ENCODE measurements at regions of chr3 and their contacts with region 1.

Region 1: GRCh38 chr3:27681245-27681748 is 40.8 kb downstream of the EOMES start:
- DNase-seq: no peak
- H3K4me3 ChIP-seq: no peak overlapping the region
- H3K27ac ChIP-seq: peak overlapping the region; percentile 33 to 64
- H3K4me1 ChIP-seq: peaks cover 3 to 15% of the 10 kb centered on the region in 2 donors
- H3K27me3 ChIP-seq: no peaks in the 10 kb centered on the region
- CTCF ChIP-seq: peak; percentile 48 to 65 (median 58)

Region 2: DNA sequence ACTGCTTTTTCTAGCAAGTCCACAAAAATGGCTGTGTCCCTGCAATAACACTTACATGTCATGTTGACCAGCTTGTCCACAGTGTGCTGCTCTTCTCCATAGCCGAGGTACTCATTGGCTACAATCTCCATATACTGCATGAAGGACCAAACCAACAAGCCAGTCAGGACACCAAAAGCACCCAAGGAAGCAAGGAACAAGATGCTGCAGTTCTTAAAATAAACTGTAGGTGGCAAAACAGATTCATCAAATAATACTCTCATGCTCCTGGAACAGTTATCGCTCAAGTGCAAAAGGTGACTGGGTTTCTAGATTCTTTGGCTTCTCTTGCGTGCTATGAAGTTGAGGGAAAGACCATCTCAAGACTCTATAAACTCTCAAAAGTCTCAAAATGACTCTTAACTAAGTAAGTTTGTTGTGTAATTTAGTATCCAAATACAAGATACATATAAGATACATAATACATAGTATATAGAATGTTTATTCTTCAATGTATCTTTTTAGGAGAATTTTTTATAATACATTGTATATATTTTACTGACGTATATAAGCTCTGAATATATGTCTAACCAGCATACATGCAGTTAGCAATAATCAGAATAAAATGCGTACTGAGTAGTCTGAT is 369.1 kb before region 1 on chr3:
- intact Hi-C with region 1: loop called (anchors 5 kb)
- DNase-seq: no peak
- H3K4me3 ChIP-seq: no peak overlapping the region
- H3K27ac ChIP-seq: no peak overlapping the region
- H3K4me1 ChIP-seq: no peaks in the 10 kb centered on the region
- H3K27me3 ChIP-seq: no peaks in the 10 kb centered on the region
- CTCF ChIP-seq: peak; percentile 65 to 83 (median 75)

Region 3: GRCh38 chr3:27503526-27503925 is 177.8 kb before region 1 on chr3:
- intact Hi-C with region 1: loop called (anchors 5 kb)
- DNase-seq: peak; percentile 38 to 89
- H3K4me3 ChIP-seq: no peak overlapping the region
- H3K27ac ChIP-seq: peak overlapping the region; percentile 70 to 84
- H3K4me1 ChIP-seq: peaks cover 6 to 13% of the 10 kb centered on the region in 2 donors
- H3K27me3 ChIP-seq: no peaks in the 10 kb centered on the region
- CTCF ChIP-seq: no peak

Region 4: DNA sequence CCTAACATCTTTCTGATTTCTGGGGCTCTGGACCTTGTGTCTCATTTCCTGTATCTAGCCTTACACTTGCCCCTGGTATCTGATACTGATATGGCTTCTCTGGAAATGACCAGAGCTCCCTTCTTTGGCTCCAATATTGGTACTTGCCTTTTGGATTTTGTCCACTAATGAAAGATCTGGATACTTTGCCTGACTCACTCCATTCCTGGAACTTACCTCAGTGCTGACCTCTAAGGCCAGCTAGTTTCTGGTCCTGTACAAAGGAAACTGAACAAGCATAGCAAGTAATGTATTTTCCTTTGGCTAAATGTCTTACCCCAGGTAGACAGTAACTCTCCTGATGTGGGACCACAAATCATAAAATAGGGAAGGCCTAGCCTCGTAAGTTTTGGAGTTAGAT is 103.3 kb before region 1 on chr3:
- intact Hi-C with region 1: loop called (anchors 5 kb)
- DNase-seq: peak in 1 of 2 donors; percentile 73
- H3K4me3 ChIP-seq: no peak overlapping the region
- H3K27ac ChIP-seq: peak overlapping the region; percentile 78 to 88
- H3K4me1 ChIP-seq: peaks cover 0 to 18% of the 10 kb centered on the region in 2 donors
- H3K27me3 ChIP-seq: no peaks in the 10 kb centered on the region
- CTCF ChIP-seq: no peak

Region 5: DNA sequence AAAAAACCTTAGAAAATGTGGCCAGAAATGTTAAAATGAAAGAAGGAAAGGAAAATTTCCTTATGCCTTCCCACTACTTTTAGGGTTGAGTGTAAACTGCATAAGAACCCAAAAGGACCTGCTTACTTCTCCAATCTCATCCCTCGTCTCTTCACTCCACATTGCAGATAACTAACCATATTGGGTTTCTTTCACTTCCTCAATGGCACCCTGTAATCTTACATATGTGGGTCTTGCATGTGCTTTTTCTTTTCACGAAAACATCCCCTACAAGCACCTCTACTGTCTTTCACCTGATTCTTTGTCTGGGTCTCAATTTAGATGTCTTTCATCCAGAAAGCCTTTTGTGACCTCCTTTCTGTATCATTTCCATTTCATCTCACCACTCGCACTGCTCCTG is 17.8 kb after region 1 on chr3:
- intact Hi-C with region 1: no loop called
- DNase-seq: no peak
- H3K4me3 ChIP-seq: no peak overlapping the region
- H3K27ac ChIP-seq: no peak overlapping the region
- H3K4me1 ChIP-seq: no peaks in the 10 kb centered on the region
- H3K27me3 ChIP-seq: no peaks in the 10 kb centered on the region
- CTCF ChIP-seq: no peak

Measured in ascending aorta (tissue), 2 donors.